HEK293 (cell line): ENCODE measurements at regions of chrX and their contacts with region 1.

Region 1: GRCh38 chrX:154013614-154014360 is 5.9 kb downstream of the IRAK1 start:
- H3K4me3 ChIP-seq: no peak overlapping the region
- H3K27ac ChIP-seq: no peak overlapping the region
- H3K4me1 ChIP-seq: no peaks in the 10 kb centered on the region
- CTCF ChIP-seq: peak; percentile 83

Region 2: DNA sequence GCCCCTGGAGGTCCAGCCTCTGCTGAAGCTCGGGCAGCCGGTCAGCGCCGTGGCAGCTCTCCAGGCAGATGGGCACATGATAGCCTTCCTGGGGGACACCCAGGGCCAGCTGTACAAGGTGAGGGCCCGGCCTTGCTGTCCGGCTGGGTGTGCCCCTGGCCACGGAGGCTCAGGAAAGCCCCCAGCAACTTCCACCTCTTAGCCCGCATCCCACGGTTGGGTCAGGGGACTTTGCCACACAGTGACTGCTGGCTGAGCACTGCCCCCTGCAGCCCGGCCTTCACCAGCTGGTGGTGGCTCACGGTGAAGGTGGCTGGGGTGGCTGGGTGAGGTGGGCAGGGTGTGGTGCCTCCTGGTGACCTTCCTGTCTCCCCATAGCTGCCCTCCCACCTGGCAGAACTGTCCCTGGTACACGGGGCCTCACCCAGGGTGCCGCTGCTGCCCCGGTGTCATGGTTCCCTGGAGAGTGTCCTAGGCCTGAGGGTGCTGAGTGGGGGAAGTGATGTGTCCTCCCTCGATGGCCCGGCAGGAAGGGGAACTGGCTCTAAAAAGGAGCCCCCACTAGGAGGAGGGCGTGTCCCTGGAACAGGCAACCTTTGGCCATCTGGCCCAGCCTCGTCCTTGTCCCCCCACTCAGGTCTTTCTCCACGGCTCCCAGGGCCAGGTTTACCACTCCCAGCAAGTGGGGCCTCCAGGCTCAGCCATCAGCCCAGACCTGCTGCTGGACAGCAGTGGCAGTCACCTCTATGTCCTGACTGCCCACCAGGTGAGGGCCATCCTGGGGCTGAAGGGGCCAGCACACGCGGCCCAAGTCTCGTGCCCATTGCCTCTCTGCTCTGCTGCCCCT is 245.3 kb before region 1 on chrX:
- CTCF ChIA-PET with region 1: no interaction called
- POLR2A ChIA-PET with region 1: no interaction called
- H3K4me3 ChIP-seq: no peak overlapping the region
- H3K27ac ChIP-seq: no peak overlapping the region
- H3K4me1 ChIP-seq: 0 out of 2 replicates have a peak, but pooled peaks cover 3% of the 10 kb centered on the region
- CTCF ChIP-seq: peak; percentile 10; the same call in 1 of the 2 replicates

Region 3: GRCh38 chrX:153922932-153923857 is 90.6 kb before region 1 on chrX:
- CTCF ChIA-PET with region 1: no interaction called
- POLR2A ChIA-PET with region 1: no interaction called
- H3K4me3 ChIP-seq: no peak overlapping the region
- H3K27ac ChIP-seq: no peak overlapping the region
- H3K4me1 ChIP-seq: peaks cover 4% of the 10 kb centered on the region
- CTCF ChIP-seq: peak; percentile 75

Region 4: DNA sequence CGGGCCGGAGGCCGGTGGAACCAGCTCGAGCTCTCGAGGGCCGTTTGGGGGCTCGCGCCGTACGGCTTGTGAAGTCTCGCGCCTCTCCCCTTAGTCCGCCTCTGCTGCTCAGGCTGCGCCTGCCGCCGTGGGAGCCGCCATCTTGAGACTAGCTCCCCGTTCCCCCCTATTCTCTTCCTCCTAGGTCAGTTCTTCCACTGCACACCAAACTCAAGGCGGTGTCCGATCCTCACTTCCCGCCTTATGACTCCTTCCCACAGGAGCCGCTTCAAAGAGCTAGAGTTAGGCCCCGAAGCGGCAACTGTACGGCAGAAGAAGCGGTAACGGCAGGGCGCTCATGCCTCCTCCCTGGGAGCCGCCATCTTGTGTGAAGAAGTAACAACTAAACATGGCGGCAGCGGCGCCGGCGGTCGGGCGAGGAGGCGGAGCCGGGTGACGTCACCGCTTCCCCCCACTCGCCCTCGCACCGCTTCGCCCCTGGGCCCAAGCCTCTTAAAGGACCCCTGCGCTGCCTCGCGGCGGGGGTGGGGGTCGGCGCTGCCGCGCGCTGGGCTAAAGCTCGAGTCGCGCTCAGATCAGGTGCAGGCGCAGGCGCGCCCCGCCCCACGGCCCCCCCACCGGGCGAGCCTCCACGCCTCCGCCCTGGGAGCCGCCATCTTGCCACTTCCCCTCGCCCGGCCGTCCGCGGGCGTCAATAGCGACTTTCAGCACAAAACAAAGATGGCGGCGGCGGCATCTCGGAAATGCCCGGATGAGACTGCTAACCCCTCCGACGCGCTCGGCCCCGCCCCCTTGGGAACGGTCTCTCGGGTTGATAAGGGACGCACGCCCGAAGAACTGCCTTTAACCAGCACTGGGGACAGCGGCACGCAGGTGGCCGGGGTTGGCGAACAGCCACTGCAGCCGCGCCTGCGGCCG is 42.1 kb before region 1 on chrX and contains the start of gene HCFC1:
- CTCF ChIA-PET with region 1: interaction called, 12 read pairs
- POLR2A ChIA-PET with region 1: interaction called, 21 read pairs
- H3K4me3 ChIP-seq: peak within 1 kb of the TSS; percentile 95
- H3K27ac ChIP-seq: peak within 1 kb of the TSS; percentile 99
- H3K4me1 ChIP-seq: peaks cover 10% of the 10 kb centered on the region
- CTCF ChIP-seq: no peak; the same call in 1 of the 2 replicates

Region 5: GRCh38 chrX:154002215-154002719 is 11.5 kb before region 1 on chrX:
- CTCF ChIA-PET with region 1: interaction called, 29 read pairs
- POLR2A ChIA-PET with region 1: interaction called, 5 read pairs
- H3K4me3 ChIP-seq: no peak overlapping the region
- H3K27ac ChIP-seq: no peak overlapping the region
- H3K4me1 ChIP-seq: no peaks in the 10 kb centered on the region
- CTCF ChIP-seq: no peak

Region 6: GRCh38 chrX:154040307-154040756 is 26.5 kb after region 1 on chrX:
- CTCF ChIA-PET with region 1: interaction called, 19 read pairs
- POLR2A ChIA-PET with region 1: no interaction called
- H3K4me3 ChIP-seq: no peak overlapping the region
- H3K27ac ChIP-seq: no peak overlapping the region
- H3K4me1 ChIP-seq: no peaks in the 10 kb centered on the region
- CTCF ChIP-seq: no peak

Region 7: GRCh38 chrX:154051201-154051810 is 37.5 kb after region 1 on chrX:
- CTCF ChIA-PET with region 1: interaction called, 35 read pairs
- POLR2A ChIA-PET with region 1: no interaction called
- H3K4me3 ChIP-seq: no peak overlapping the region
- H3K27ac ChIP-seq: no peak overlapping the region
- H3K4me1 ChIP-seq: no peaks in the 10 kb centered on the region
- CTCF ChIP-seq: peak; percentile 64

Region 8: GRCh38 chrX:154458114-154458953 is 444.5 kb after region 1 on chrX and contains the start of gene PLXNA3:
- CTCF ChIA-PET with region 1: no interaction called
- POLR2A ChIA-PET with region 1: no interaction called
- H3K4me3 ChIP-seq: peak within 1 kb of the TSS; percentile 70
- H3K27ac ChIP-seq: peak within 1 kb of the TSS; percentile 75
- H3K4me1 ChIP-seq: no peaks in the 10 kb centered on the region
- CTCF ChIP-seq: no peak